ENCODE measurements at regions of chr16 and their contacts with region 1.

Region 1: DNA sequence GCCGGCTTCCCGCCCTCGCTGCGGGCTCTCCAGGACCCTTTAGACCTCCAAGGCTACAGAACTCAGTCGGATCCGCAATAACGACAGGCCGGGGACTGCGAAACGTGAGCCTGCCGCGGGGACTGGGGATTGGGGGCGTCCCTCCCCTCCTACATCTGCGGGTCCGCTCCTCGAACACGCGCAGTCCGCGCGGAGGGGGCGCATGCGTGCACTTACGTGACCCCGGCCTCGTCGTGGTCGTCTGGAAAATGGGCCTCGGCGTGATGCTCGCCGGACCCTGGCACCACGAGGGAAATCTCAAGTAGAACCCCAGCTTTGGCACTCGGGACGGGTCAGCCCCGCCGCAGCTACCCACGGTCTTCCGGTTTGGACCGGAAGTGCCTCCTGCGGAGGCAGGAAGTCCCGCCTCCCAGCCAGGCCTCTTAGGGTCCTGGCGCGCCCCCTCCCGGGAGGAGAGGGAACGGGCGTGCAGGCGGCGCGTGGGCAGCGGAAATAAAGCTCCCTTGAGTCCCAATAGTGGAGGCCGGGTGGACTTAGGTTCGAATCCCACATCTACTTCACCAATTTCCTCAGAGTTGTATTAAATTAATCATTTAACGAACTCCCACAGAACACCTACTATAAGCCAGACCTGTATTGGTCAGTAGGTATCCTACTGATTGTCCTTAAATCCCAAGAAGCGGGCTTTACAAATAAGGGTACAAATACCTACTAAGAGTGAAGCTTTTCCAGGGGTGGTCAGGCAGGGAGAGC is at the start of gene TAF1C:
- DNase-seq: peak; percentile 81 to 94 (median 87)
- ATAC-seq: peak; percentile 99
- H3K4me3 ChIP-seq: peak within 1 kb of the TSS; percentile 91
- H3K4me3 Mint-ChIP-seq: peak within 1 kb of the TSS; percentile 89 to 94 (median 92)
- H3K27ac ChIP-seq: peak within 1 kb of the TSS; percentile 80
- H3K27ac Mint-ChIP-seq: peak within 1 kb of the TSS; percentile 78 to 95 (median 91)
- H3K4me1 ChIP-seq: peaks cover 0 to 6% of the 10 kb centered on the region in 2 donors
- H3K4me1 Mint-ChIP-seq: peaks cover 22 to 29% (median 25%) of the 10 kb centered on the region in 7 donors
- H3K27me3 ChIP-seq: no peaks in the 10 kb centered on the region
- H3K27me3 Mint-ChIP-seq: no peaks in the 10 kb centered on the region
- total RNA-seq, gene TAF1C: 62.6 to 127 (median 85.4) TPM

Region 2: DNA sequence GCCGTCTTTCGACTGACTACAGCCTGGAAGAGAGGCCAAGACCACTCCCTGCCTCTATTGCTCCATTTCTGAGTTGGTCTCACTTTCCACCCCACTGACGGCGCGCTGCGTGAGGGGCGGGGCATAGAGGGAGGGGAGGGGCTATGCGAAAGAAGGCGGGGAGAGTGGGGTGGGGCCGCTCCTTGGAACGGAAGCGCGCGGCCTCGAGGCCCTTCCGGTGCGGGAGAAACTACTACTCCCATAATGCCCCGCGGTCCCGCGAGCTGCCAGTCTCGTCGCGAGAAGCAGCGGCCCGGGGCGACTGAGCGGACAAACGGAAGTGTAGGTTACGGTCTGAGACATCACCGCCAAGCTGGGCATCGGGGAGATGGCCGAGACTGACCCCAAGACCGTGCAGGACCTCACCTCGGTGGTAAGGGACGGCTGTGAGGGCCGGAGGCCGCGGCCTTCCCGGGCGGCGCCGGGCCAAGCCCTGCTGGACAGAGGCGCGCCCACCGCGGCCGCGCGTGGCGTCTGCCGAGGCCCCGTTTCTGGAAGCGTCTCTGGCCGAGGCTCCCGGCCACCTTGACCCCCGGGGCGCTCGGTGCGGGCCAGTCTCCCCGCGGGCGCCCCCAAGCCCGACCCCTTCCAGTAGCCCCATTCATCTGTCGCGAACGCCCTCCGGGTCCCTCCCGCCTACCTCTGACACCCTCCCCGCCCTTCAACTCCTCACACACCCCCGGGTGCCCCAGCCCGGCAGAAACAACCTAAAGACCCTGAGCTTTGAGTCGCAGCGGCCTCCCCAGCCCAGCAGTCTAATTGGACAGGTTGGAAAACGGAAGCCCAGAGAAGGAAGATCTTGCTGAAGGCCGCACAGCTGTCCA is 378.9 kb before region 1 on chr16 and contains the start of gene HSBP1:
- CTCF ChIA-PET with region 1: no interaction called
- POLR2A ChIA-PET with region 1: no interaction called
- intact Hi-C with region 1: loop called (anchors 1 to 2 kb)
- DNase-seq: peak; percentile 85 to 93 (median 91)
- ATAC-seq: peak; percentile 100
- H3K4me3 ChIP-seq: peak within 1 kb of the TSS; percentile 90
- H3K4me3 Mint-ChIP-seq: peak within 1 kb of the TSS; percentile 91 to 99 (median 98)
- H3K27ac ChIP-seq: peak within 1 kb of the TSS; percentile 87
- H3K27ac Mint-ChIP-seq: peak within 1 kb of the TSS; percentile 87 to 98 (median 95)
- H3K4me1 ChIP-seq: peaks cover 9 to 21% of the 10 kb centered on the region in 2 donors
- H3K4me1 Mint-ChIP-seq: peaks cover 19 to 55% (median 48%) of the 10 kb centered on the region in 7 donors
- H3K27me3 ChIP-seq: no peaks in the 10 kb centered on the region
- H3K27me3 Mint-ChIP-seq: peaks cover 0 to 5% (median 0%) of the 10 kb centered on the region in 5 donors
- total RNA-seq, gene HSBP1: 20.6 to 78.3 (median 32.3) TPM

Region 3: GRCh38 chr16:83898463-83899271 is 288.2 kb before region 1 on chr16 and contains the start of gene MLYCD:
- CTCF ChIA-PET with region 1: no interaction called
- POLR2A ChIA-PET with region 1: no interaction called
- intact Hi-C with region 1: loop called (anchors 1 to 5 kb)
- DNase-seq: peak; percentile 59 to 82 (median 68)
- ATAC-seq: peak; percentile 96
- H3K4me3 ChIP-seq: peak within 1 kb of the TSS; percentile 61
- H3K4me3 Mint-ChIP-seq: peak within 1 kb of the TSS; percentile 86 to 100 (median 96)
- H3K27ac ChIP-seq: peak within 1 kb of the TSS; percentile 70
- H3K27ac Mint-ChIP-seq: peak within 1 kb of the TSS; percentile 65 to 96 (median 88)
- H3K4me1 ChIP-seq: peaks cover 4 to 17% of the 10 kb centered on the region in 2 donors
- H3K4me1 Mint-ChIP-seq: peaks cover 20 to 50% (median 41%) of the 10 kb centered on the region in 7 donors
- H3K27me3 ChIP-seq: peaks cover 0 to 4% of the 10 kb centered on the region in 2 donors
- H3K27me3 Mint-ChIP-seq: peaks cover 4 to 22% (median 8%) of the 10 kb centered on the region in 5 donors
- total RNA-seq, gene MLYCD: 6.6 to 11.4 (median 8.1) TPM

Region 4: GRCh38 chr16:83952940-83953795 is 233.7 kb before region 1 on chr16 and contains the start of gene OSGIN1:
- CTCF ChIA-PET with region 1: no interaction called
- POLR2A ChIA-PET with region 1: no interaction called
- intact Hi-C with region 1: loop called in 1 of 2 experiments (anchors 2 kb)
- DNase-seq: peak in 4 of 9 donors; percentile 14 to 81 (median 28)
- ATAC-seq: peak; percentile 84
- H3K4me3 ChIP-seq: no peak within 1 kb of the TSS
- H3K4me3 Mint-ChIP-seq: peak within 1 kb of the TSS in 9 of 10 donors; percentile 48 to 86 (median 66)
- H3K27ac ChIP-seq: no peak within 1 kb of the TSS
- H3K27ac Mint-ChIP-seq: peak within 1 kb of the TSS in 1 of 9 donors; percentile 63
- H3K4me1 ChIP-seq: peaks cover 0 to 14% of the 10 kb centered on the region in 2 donors
- H3K4me1 Mint-ChIP-seq: peaks cover 0 to 12% (median 9%) of the 10 kb centered on the region in 7 donors
- H3K27me3 ChIP-seq: peaks cover 0 to 6% of the 10 kb centered on the region in 2 donors
- H3K27me3 Mint-ChIP-seq: peaks cover 7 to 36% (median 17%) of the 10 kb centered on the region in 5 donors
- total RNA-seq, gene OSGIN1: 0.34 to 8.4 (median 1.3) TPM

Region 5: GRCh38 chr16:84084570-84085270 is 102.1 kb before region 1 on chr16:
- CTCF ChIA-PET with region 1: interaction called, 31 read pairs
- POLR2A ChIA-PET with region 1: no interaction called
- intact Hi-C with region 1: loop called (anchors 1 kb)
- DNase-seq: peak; percentile 31 to 71 (median 65)
- ATAC-seq: peak; percentile 87
- H3K4me3 ChIP-seq: no peak overlapping the region
- H3K4me3 Mint-ChIP-seq: peak overlapping the region in 1 of 10 donors; percentile 18
- H3K27ac ChIP-seq: no peak overlapping the region
- H3K27ac Mint-ChIP-seq: peak overlapping the region in 1 of 9 donors; percentile 15
- H3K4me1 ChIP-seq: peaks cover 4 to 24% of the 10 kb centered on the region in 2 donors
- H3K4me1 Mint-ChIP-seq: peaks cover 31 to 59% (median 52%) of the 10 kb centered on the region in 7 donors
- H3K27me3 ChIP-seq: no peaks in the 10 kb centered on the region
- H3K27me3 Mint-ChIP-seq: no peaks in the 10 kb centered on the region

Region 6: GRCh38 chr16:84144859-84145639 is 41.8 kb before region 1 on chr16 and contains the starts of genes DNAAF1 and HSDL1:
- CTCF ChIA-PET with region 1: no interaction called
- POLR2A ChIA-PET with region 1: no interaction called
- intact Hi-C with region 1: loop called (anchors 1 kb)
- DNase-seq: peak; percentile 88 to 99 (median 94)
- ATAC-seq: peak; percentile 95
- H3K4me3 ChIP-seq: peak within 1 kb of the TSS; percentile 68
- H3K4me3 Mint-ChIP-seq: peak within 1 kb of the TSS; percentile 91 to 98 (median 94)
- H3K27ac ChIP-seq: peak within 1 kb of the TSS; percentile 87
- H3K27ac Mint-ChIP-seq: peak within 1 kb of the TSS; percentile 79 to 95 (median 89)
- H3K4me1 ChIP-seq: peaks cover 4 to 8% of the 10 kb centered on the region in 2 donors
- H3K4me1 Mint-ChIP-seq: peaks cover 9 to 32% (median 29%) of the 10 kb centered on the region in 7 donors
- H3K27me3 ChIP-seq: no peaks in the 10 kb centered on the region
- H3K27me3 Mint-ChIP-seq: peaks cover 0 to 22% (median 0%) of the 10 kb centered on the region in 5 donors
- total RNA-seq, gene DNAAF1: 0.66 to 2.2 TPM in 2 of 5 experiments, not detected in the others
- total RNA-seq, gene HSDL1: 12.6 to 26.6 (median 14.4) TPM

Region 7: GRCh38 chr16:84247844-84248243 is 61.0 kb after region 1 on chr16:
- CTCF ChIA-PET with region 1: no interaction called
- POLR2A ChIA-PET with region 1: no interaction called
- intact Hi-C with region 1: no loop called
- DNase-seq: no peak
- ATAC-seq: no peak
- H3K4me3 ChIP-seq: no peak overlapping the region
- H3K4me3 Mint-ChIP-seq: no peak overlapping the region
- H3K27ac ChIP-seq: no peak overlapping the region
- H3K27ac Mint-ChIP-seq: no peak overlapping the region
- H3K4me1 ChIP-seq: no peaks in the 10 kb centered on the region
- H3K4me1 Mint-ChIP-seq: peaks cover 0 to 1% (median 0%) of the 10 kb centered on the region in 7 donors
- H3K27me3 ChIP-seq: no peaks in the 10 kb centered on the region
- H3K27me3 Mint-ChIP-seq: peaks cover 6 to 33% (median 18%) of the 10 kb centered on the region in 5 donors